H1 (cell line): ENCODE measurements at regions of chr1 and their contacts with region 1.

Region 1: DNA sequence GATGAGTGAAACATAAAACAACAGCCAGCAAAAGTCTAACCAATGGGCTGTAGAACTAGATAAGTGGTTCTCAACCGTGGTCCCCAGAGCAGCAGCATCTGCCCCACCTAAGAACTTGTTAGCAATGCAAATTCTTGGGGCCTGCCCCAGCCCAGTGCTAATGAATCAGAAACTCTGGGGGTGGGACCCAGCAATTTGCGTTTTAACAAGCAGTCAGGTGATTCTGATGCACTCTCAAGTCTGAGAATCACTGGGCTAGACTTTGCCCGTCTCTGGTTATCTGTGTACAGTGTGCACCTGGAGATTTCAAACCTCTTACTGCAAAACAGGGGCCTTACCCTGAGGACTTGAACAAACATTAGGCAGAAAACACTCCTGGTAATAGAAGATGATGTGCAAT is 66.5 kb downstream of the PLXNA2 start:
- DNase-seq: no peak
- H3K4me3 ChIP-seq: no peak overlapping the region
- H3K27ac ChIP-seq: no peak overlapping the region
- H3K4me1 ChIP-seq: peaks cover 11 to 29% (median 14%) of the 10 kb centered on the region in 4 experiments
- H3K27me3 ChIP-seq: no peaks in the 10 kb centered on the region; a peak in 2 of 7 replicates
- CTCF ChIP-seq: no peak
- EP300 ChIP-seq: no peak
- POLR2A ChIP-seq: no peak
- RAD21 ChIP-seq: no peak

Region 2: GRCh38 chr1:208059409-208059995 is 118.2 kb before region 1 on chr1:
- CTCF ChIA-PET with region 1: no interaction called
- POLR2A ChIA-PET with region 1: no interaction called
- DNase-seq: no peak
- H3K4me3 ChIP-seq: no peak overlapping the region
- H3K27ac ChIP-seq: no peak overlapping the region
- H3K4me1 ChIP-seq: peaks cover 0 to 10% (median 5%) of the 10 kb centered on the region in 4 experiments; a peak in 6 of 7 replicates
- H3K27me3 ChIP-seq: no peaks in the 10 kb centered on the region
- CTCF ChIP-seq: no peak
- EP300 ChIP-seq: no peak
- POLR2A ChIP-seq: no peak
- RAD21 ChIP-seq: no peak

Region 3: DNA sequence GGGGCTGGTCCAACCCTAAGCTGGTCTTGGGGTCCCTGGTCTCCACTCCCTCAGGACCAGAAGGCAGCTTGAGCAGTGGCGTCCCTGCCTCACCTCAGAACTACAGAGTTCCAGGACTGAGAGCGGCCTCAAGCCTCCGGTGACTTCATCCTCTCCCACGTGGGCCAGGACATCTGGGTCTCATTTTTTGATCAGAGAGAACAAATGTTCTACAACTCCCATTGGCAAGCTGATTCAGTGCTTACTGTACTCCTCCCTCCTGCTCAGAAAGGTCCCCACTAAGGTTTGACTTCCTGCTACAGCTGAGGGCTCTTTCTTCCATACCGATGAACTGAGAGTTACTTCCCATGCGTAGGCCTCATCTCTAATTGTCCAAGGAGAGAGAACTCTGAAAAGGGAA is 12.0 kb before region 1 on chr1:
- CTCF ChIA-PET with region 1: interaction called, 28 read pairs
- POLR2A ChIA-PET with region 1: interaction called, 3 read pairs
- DNase-seq: no peak
- H3K4me3 ChIP-seq: no peak overlapping the region
- H3K27ac ChIP-seq: no peak overlapping the region
- H3K4me1 ChIP-seq: peaks cover 5 to 21% (median 16%) of the 10 kb centered on the region in 4 experiments
- H3K27me3 ChIP-seq: no peaks in the 10 kb centered on the region
- CTCF ChIP-seq: no peak
- EP300 ChIP-seq: no peak
- POLR2A ChIP-seq: no peak
- RAD21 ChIP-seq: no peak

Region 4: DNA sequence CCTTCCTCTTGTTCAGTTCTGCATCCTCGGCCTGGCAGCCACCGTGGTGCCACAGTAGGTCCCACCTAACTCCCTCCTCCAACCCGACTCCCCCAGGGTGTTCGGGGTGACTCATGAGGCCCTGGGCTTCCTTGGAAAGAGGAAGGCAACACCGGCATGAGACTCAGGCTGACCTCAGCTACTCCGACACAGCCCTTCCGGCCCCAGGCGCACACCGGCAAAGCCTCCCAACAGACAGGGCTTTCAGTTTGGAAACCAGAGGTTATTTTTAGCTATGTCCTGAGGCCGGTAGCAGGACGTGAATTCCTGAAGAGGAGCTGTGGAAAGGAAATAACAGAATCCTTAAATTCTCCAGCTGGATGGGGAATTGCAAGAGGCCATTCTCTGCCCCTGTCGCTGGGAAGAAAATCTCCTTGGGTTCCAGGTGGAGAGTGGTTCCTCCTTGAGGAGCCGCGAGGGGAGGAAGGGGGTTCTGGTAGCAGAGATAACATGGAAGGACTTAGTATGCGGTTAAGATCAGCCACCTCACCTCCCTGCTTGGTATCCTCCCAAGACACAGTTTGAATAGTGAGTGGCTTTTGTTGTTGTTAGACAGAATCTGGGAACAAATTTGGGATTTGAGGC is 42.1 kb after region 1 on chr1:
- CTCF ChIA-PET with region 1: no interaction called
- POLR2A ChIA-PET with region 1: no interaction called
- DNase-seq: no peak
- H3K4me3 ChIP-seq: no peak overlapping the region
- H3K27ac ChIP-seq: no peak overlapping the region
- H3K4me1 ChIP-seq: no peaks in the 10 kb centered on the region
- H3K27me3 ChIP-seq: no peaks in the 10 kb centered on the region
- CTCF ChIP-seq: no peak
- EP300 ChIP-seq: no peak
- POLR2A ChIP-seq: no peak
- RAD21 ChIP-seq: no peak